ENCODE measurements at regions of chr4 and their contacts with region 1.

Region 1: DNA sequence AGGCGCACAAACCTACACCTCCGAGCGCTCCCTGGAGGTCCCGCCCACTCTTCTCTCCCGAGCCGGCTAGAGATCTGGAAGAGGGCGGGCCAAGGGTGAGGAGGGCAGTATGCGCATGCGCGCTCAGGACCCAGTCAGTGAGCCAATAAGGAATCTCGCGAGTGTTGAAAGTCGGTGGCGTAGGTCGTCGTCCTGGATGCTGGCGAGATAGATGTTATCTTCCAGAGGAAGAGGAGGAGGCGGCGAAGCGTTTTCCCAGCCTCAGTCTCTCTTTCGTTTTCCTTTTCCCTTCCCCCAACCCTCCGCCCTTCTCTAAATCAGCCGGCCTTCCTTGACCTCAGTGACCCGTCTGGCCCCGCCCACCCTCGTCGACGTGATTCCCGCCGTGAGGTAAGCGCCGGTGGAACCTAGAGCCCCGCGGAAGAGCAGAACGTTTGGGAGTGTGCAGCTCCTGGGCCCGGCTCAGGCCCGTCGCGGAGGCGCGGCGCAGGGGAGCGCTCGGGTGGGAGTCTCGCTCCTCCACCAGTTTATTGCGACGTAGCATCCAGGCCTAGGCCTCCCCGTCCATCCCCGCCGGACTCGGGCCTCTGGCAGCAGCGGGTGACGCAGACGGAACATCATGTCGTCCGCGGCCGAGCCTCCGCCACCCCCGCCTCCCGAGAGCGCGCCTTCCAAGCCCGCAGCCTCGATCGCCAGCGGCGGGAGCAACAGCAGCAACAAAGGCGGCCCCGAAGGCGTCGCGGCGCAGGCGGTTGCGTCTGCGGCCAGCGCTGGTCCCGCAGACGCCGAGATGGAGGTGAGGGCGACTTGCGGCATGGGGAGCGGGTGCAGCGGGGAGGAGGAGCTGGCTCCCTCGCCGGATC is at the start of gene SMARCA5:
- DNase-seq: peak in 34 of 35 experiments; percentile 86 to 99 (median 95)
- ATAC-seq: peak; percentile 88 to 91 (median 90)
- H3K4me3 ChIP-seq: peak within 1 kb of the TSS; percentile 88 to 94
- H3K4me3 Mint-ChIP-seq: peak within 1 kb of the TSS; percentile 97 to 98 (median 98)
- H3K27ac ChIP-seq: peak within 1 kb of the TSS; percentile 97
- H3K27ac Mint-ChIP-seq: peak within 1 kb of the TSS; percentile 99 to 100
- H3K4me1 ChIP-seq: peaks cover 14 to 29% of the 10 kb centered on the region in 2 experiments
- H3K4me1 Mint-ChIP-seq: peaks cover 37 to 44% (median 42%) of the 10 kb centered on the region in 3 donors
- H3K27me3 ChIP-seq: peaks cover 2 to 9% of the 10 kb centered on the region in 2 experiments
- H3K27me3 Mint-ChIP-seq: no peaks in the 10 kb centered on the region
- total RNA-seq, gene SMARCA5: 43.4 to 56.4 (median 47.1) TPM

Region 2: DNA sequence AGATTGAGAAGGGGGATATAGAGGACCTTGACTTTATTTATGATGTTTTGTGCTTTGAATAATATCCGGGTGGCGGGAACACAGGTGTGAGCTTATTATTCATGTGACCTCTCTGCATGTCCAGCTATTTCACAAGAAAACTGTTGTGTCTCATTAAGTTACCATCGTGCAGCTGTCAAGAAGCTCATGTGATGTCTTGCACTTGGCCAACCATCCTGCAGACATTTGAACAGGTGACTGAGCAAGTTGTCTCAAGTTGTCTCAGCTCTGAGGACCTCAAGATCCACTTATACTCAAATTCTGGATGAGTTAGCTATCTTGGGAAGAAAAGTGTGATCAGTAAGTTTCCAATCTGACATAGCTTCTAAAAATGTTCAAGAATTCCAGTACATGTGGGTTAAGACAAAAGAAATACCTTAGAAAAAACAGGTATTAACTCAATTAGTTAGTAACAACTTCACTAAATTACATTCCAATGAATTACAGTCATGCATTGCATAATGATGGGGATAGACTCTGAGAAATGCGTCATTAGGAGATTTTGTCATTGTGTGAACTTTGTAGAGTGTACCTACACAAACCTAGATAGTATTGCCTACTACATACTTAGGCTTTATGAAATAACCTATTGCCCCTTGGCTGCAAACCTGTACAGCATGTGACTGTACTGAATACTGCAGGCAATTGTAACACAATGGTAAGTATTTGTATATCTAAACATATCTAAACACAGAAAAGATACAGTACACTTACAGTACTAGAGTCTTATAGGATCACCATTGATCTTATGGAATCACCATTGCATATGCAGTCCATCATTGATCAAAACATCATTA is 1129.5 kb before region 1 on chr4:
- CTCF ChIA-PET with region 1: no interaction called
- POLR2A ChIA-PET with region 1: interaction called in 1 of 2 experiments, 11 read pairs
- DNase-seq: no peak
- ATAC-seq: no peak
- H3K4me3 ChIP-seq: no peak overlapping the region
- H3K4me3 Mint-ChIP-seq: peak overlapping the region in 1 of 3 donors; percentile 29
- H3K27ac ChIP-seq: peak overlapping the region; percentile 4
- H3K27ac Mint-ChIP-seq: peak overlapping the region; percentile 79 to 88
- H3K4me1 ChIP-seq: peaks cover 3 to 8% of the 10 kb centered on the region in 2 experiments
- H3K4me1 Mint-ChIP-seq: peaks cover 69 to 82% (median 74%) of the 10 kb centered on the region in 3 donors
- H3K27me3 ChIP-seq: no peaks in the 10 kb centered on the region
- H3K27me3 Mint-ChIP-seq: no peaks in the 10 kb centered on the region

Region 3: DNA sequence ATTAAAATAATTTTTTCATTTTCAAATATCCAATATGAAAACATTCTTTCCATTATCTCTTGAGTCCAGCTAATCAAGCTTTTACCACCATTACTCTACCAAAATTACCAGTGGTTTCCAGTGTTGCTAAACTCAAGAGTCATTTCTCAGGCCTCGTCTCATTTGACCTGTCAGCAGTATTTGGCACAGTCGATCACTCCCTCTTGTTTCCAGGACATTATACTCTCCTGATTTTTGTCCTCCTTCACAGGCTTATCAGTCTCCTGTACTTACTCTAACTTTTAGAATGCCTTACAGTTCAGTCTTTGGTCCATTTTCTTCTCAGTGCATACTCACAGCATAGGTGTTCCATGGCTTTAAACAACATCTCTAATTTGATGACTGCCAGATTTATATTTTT is 317.2 kb before region 1 on chr4:
- CTCF ChIA-PET with region 1: no interaction called
- POLR2A ChIA-PET with region 1: interaction called in 1 of 2 experiments, 12 read pairs
- DNase-seq: no peak
- ATAC-seq: no peak
- H3K4me3 ChIP-seq: no peak overlapping the region
- H3K4me3 Mint-ChIP-seq: no peak overlapping the region
- H3K27ac ChIP-seq: no peak overlapping the region
- H3K27ac Mint-ChIP-seq: no peak overlapping the region
- H3K4me1 ChIP-seq: no peaks in the 10 kb centered on the region
- H3K4me1 Mint-ChIP-seq: peaks cover 45 to 54% (median 46%) of the 10 kb centered on the region in 3 donors
- H3K27me3 ChIP-seq: no peaks in the 10 kb centered on the region
- H3K27me3 Mint-ChIP-seq: no peaks in the 10 kb centered on the region

Region 4: DNA sequence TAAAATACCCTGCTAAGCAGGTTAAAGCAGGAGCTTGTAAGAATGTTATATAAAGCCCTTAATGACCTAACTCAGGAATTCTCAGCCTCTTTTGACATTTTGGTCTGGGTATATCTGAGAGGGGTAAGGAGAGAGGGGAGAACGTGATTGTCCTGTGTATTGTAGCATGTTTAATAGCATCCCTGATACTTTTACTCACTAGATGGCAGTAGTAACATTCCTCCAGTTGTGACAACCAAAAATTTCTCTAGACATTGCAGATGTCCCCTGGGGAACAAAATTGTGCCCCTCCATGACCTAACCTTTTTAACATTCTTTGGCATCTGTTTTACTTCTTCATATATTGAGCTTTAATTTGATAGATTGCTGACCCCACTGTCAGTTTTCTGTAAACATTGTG is 17.8 kb after region 1 on chr4:
- CTCF ChIA-PET with region 1: no interaction called
- POLR2A ChIA-PET with region 1: interaction called in 1 of 2 experiments, 13 read pairs
- DNase-seq: no peak
- ATAC-seq: peak in 1 of 4 experiments; percentile 14
- H3K4me3 ChIP-seq: no peak overlapping the region
- H3K4me3 Mint-ChIP-seq: no peak overlapping the region
- H3K27ac ChIP-seq: no peak overlapping the region
- H3K27ac Mint-ChIP-seq: no peak overlapping the region
- H3K4me1 ChIP-seq: no peaks in the 10 kb centered on the region
- H3K4me1 Mint-ChIP-seq: peaks cover 7 to 20% (median 16%) of the 10 kb centered on the region in 3 donors
- H3K27me3 ChIP-seq: no peaks in the 10 kb centered on the region
- H3K27me3 Mint-ChIP-seq: no peaks in the 10 kb centered on the region

Region 5: GRCh38 chr4:143554728-143555597 is 41.4 kb after region 1 on chr4:
- CTCF ChIA-PET with region 1: interaction called, 4 read pairs
- POLR2A ChIA-PET with region 1: interaction called, 9 to 10 read pairs
- DNase-seq: no peak
- ATAC-seq: no peak
- H3K4me3 ChIP-seq: no peak overlapping the region
- H3K4me3 Mint-ChIP-seq: no peak overlapping the region
- H3K27ac ChIP-seq: no peak overlapping the region
- H3K27ac Mint-ChIP-seq: no peak overlapping the region
- H3K4me1 ChIP-seq: peaks cover 0 to 9% of the 10 kb centered on the region in 2 experiments
- H3K4me1 Mint-ChIP-seq: peaks cover 12 to 15% (median 14%) of the 10 kb centered on the region in 3 donors
- H3K27me3 ChIP-seq: peaks cover 0 to 2% of the 10 kb centered on the region in 2 experiments
- H3K27me3 Mint-ChIP-seq: no peaks in the 10 kb centered on the region

Measured in T-cell (primary cell).